ENCODE measurements at regions of chr3 and their contacts with region 1.

Region 1: DNA sequence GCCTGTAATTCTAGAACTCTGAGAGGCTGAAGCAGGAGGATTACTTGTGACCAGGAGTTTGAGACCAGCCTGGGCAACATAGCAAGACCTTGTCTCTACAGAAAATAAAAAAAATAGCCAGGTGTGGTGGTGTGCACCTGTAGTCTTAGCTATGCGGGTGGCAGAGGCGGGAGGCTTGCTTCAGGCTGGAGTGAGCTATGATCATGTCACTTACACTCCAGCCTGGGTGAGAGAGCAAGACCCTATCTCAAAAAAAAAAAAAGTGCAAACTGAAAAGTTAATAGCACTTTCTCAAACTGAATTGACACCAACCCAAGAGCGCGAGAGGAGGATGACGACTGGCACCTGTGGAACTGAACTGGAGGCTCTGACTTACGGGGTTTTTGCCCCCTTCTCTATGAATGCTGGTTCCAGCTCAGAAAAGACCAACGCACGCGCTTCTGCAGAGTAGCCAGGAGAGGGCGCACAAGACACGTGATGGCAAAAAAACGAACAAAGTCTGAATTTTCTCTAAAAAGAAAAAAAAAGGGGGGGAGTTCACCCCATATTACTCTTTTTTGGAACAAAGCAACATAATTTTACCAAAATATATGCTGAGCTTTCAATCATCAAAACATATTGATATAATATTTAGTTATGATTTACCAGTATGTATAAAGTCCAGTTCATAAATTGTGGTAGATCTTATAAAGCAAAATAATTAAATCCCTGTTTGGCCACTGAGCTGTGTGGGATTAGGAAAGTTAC is 23.7 kb downstream of the CFAP92 start:
- DNase-seq: peak; percentile 79
- ATAC-seq: peak; percentile 73
- H3K4me3 Mint-ChIP-seq: no peak overlapping the region
- H3K27ac Mint-ChIP-seq: no peak overlapping the region
- H3K4me1 Mint-ChIP-seq: peaks cover 14% of the 10 kb centered on the region
- H3K27me3 Mint-ChIP-seq: peaks cover 3% of the 10 kb centered on the region

Region 2: DNA sequence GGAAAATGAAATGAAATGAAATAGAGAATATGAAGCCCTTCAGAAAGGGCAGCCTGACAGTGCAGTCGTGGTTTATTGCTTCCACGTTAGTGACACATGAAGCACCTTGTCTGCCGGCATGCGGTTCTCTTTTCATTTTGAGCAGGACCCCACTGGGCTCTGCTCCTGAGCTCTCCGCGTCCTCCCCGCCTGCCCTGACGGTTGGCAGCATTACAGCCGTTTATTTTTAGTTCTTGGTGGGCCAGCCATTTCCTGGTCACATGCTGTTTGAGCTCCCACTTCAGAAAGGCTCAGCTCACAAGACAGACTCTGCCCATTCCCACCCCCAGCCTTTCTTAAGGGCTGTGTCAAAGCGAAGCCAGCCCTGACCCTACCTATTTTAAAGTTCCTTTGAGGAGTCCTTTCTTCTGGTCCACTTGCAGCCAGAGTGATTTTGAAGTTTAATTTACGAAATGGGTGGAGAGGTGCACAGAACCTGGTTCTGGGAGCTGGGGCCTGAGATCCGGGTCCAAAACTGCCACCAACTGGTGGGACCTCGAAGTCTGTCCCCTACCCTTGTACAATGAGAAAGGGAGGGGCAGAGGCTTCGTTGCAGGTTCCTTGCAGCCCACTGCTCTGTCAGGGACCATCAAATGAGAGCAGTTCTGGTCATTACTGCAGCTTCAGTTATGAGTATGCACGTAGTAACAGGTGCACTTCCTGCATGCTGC is 1207.9 kb before region 1 on chr3:
- CTCF ChIA-PET with region 1: no interaction called
- POLR2A ChIA-PET with region 1: no interaction called
- DNase-seq: peak; percentile 30
- ATAC-seq: peak; percentile 54
- H3K4me3 Mint-ChIP-seq: peak overlapping the region; percentile 37
- H3K27ac Mint-ChIP-seq: peak overlapping the region; percentile 48
- H3K4me1 Mint-ChIP-seq: peaks cover 42% of the 10 kb centered on the region
- H3K27me3 Mint-ChIP-seq: no peaks in the 10 kb centered on the region

Region 3: GRCh38 chr3:128983293-128984069 is 13.3 kb after region 1 on chr3:
- CTCF ChIA-PET with region 1: interaction called, 32 read pairs
- POLR2A ChIA-PET with region 1: no interaction called
- DNase-seq: no peak
- ATAC-seq: no peak
- H3K4me3 Mint-ChIP-seq: no peak overlapping the region
- H3K27ac Mint-ChIP-seq: no peak overlapping the region
- H3K4me1 Mint-ChIP-seq: no peaks in the 10 kb centered on the region
- H3K27me3 Mint-ChIP-seq: peaks cover 9% of the 10 kb centered on the region

Region 4: DNA sequence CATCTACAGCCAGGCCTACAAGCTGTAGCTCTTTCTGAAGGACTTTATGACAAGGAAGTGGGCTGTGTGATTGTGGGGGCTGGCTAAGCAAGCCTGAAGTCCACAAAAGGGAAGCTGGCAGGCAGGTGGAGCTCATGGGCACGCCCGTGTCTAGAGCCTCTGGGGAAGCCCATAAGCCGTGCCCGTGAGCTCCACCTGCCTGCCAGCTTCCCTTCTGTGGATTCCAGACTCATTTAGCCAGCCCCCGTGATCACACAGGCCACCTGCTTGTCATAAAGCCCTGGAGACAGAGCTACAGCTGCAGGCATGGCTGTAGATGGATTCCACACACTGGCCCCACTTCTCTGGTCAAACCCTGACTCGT is 46.2 kb after region 1 on chr3:
- CTCF ChIA-PET with region 1: interaction called, 115 read pairs
- POLR2A ChIA-PET with region 1: interaction called, 12 read pairs
- DNase-seq: peak; percentile 81
- ATAC-seq: peak; percentile 88
- H3K4me3 Mint-ChIP-seq: peak overlapping the region; percentile 66
- H3K27ac Mint-ChIP-seq: peak overlapping the region; percentile 91
- H3K4me1 Mint-ChIP-seq: peaks cover 37% of the 10 kb centered on the region
- H3K27me3 Mint-ChIP-seq: no peaks in the 10 kb centered on the region

Region 5: GRCh38 chr3:129052675-129053074 is 82.5 kb after region 1 on chr3:
- CTCF ChIA-PET with region 1: interaction called, 86 read pairs
- POLR2A ChIA-PET with region 1: interaction called, 5 read pairs
- DNase-seq: no peak
- ATAC-seq: no peak
- H3K4me3 Mint-ChIP-seq: no peak overlapping the region
- H3K27ac Mint-ChIP-seq: no peak overlapping the region
- H3K4me1 Mint-ChIP-seq: peaks cover 8% of the 10 kb centered on the region
- H3K27me3 Mint-ChIP-seq: peaks cover 12% of the 10 kb centered on the region

Region 6: DNA sequence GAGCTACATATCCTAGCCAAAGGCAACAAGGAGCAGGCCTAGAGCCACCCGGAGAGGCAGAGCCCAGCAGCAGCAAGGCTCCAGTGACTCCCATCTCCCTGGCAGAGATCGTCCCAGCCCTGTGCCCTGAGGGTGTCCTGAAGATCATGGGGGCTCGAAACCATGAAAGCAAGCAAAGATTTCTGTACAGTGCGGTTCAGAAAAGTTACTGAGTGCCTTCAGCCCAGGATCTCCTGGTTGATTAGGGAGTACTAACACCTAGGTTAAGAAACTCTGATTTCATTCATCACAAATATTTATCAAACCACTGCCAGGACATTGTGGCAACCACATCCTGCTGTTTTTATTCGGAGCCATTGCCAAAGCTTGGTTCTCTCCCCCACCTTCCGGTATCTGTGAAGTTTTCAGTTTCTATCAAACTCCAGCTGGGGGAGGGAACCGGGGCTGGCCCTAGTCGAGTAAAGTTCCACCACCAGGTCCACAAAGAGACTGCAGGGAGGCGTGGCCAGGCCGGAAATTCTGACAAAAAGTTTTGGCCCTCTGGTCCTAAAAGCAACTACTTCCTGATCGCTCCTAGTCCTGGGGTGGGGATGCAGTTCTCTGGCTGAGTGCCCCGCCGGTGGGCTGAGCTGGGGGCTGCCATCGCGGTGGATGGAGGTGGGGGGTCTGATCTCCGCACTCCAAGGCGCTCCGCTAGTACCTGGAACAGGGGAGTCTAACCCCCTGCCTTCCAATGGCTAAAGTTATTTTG is 150.3 kb after region 1 on chr3:
- CTCF ChIA-PET with region 1: interaction called, 21 read pairs
- POLR2A ChIA-PET with region 1: interaction called, 5 read pairs
- DNase-seq: peak; percentile 98
- ATAC-seq: peak; percentile 69
- H3K4me3 Mint-ChIP-seq: peak overlapping the region; percentile 84
- H3K27ac Mint-ChIP-seq: peak overlapping the region; percentile 91
- H3K4me1 Mint-ChIP-seq: peaks cover 56% of the 10 kb centered on the region
- H3K27me3 Mint-ChIP-seq: no peaks in the 10 kb centered on the region

Region 7: GRCh38 chr3:129183569-129184395 is 213.6 kb after region 1 on chr3 and contains the start of gene CNBP:
- CTCF ChIA-PET with region 1: interaction called, 10 read pairs
- POLR2A ChIA-PET with region 1: interaction called, 6 read pairs
- DNase-seq: peak; percentile 94
- ATAC-seq: peak; percentile 98
- H3K4me3 Mint-ChIP-seq: peak within 1 kb of the TSS; percentile 92
- H3K27ac Mint-ChIP-seq: peak within 1 kb of the TSS; percentile 98
- H3K4me1 Mint-ChIP-seq: peaks cover 45% of the 10 kb centered on the region
- H3K27me3 Mint-ChIP-seq: no peaks in the 10 kb centered on the region
- total RNA-seq, gene CNBP: 263 to 273 TPM

Region 8: DNA sequence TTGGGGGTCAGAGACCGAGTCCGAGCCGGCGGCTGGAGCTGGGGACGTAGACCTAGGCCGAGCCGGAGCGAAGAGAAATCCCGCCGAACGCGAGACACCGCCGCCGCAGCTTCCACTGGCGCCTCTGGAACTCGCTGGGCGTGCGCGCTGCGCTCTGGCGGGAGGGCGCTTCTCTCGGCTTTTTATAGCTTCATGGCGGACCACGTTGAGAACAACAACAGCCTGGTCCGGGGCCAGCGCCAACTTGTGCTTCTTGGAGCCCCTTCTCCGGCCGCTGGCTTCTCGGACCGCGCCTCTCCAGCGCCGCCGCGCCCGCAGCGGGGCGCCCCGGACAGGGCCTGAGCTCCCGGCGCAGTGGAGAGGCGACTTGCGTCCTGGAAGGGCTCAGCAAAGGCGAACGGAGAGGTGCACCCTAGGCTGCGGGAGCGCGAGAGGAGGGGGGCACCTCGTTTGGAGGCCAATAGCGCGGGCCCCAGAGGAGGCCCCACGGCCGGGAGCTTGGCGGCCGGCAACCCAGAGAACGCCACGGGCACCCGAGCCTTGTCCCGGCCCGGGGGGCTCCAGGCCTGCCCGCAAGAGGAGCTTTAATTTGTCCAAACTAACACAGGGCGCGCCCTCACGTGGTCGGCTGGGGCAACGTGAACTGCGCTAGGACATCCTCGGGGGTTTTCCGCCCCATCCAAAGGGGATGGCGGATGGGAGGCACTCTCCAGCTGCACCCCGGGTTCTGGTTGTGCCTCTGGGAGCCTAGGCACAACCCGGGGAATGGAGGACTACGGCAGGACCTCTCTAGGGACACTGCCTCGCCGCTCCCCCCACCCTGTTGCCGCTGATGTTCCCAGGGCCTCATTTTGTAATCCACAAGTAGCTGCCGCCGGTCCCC is 346.2 kb after region 1 on chr3:
- CTCF ChIA-PET with region 1: interaction called, 13 read pairs
- POLR2A ChIA-PET with region 1: interaction called, 6 read pairs
- DNase-seq: peak; percentile 92
- ATAC-seq: peak; percentile 48
- H3K4me3 Mint-ChIP-seq: peak overlapping the region; percentile 91
- H3K27ac Mint-ChIP-seq: peak overlapping the region; percentile 66
- H3K4me1 Mint-ChIP-seq: peaks cover 34% of the 10 kb centered on the region
- H3K27me3 Mint-ChIP-seq: no peaks in the 10 kb centered on the region

Measured in activated CD8-positive, alpha-beta T cell treated with anti-CD3 and anti-CD28 coated beads, Interleukin-2, amount 10 ng/mL, durations not matched to agents 7 days and 5 days (primary cell).